Dendritic cell treated with granulocyte-macrophage colony-stimulating factor and Interleukin-4, amounts not matched to agents 40 ng/mL and 50 ng/mL, for 4 days (primary cell): ENCODE measurements at regions of chr20 and their contacts with region 1.

Region 1: DNA sequence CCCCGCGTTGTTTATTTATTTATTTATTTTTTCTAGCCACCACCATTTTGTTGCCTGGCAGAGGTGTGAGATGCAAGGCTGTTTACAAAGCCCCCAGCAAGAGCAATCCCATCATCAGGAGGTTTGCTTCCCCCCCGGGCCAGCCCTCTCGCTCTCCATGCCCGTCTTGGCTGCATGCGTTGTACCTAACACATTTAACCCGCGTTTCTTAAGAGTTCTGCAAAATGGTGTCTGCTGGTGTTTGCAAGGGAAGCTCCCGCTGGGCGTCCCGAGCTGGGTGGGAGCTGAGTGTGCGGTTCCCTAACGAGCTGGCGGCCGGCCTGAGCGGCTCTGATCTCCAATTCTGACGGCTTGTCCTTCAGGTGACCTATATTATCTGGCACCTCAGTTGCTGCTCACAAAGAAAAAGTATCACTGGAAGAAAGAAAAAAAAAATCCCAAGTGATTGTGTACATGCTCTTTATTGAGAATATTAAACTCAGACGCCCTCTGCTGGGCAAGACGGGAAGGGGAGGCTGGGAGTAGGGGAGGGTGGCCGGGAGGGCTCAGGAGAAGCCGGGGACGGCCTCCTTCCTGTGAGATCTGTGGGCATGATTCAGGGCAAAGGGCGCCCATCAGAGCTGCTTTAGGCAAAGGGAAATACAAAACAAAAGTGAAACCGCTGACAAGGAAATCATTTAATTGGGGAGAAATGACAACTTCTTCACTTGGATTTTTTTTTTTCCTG is 154.8 kb downstream of the BCAS1 start:
- H3K4me3 Mint-ChIP-seq: peak overlapping the region; percentile 94
- H3K27ac Mint-ChIP-seq: peak overlapping the region; percentile 95
- H3K4me1 Mint-ChIP-seq: peaks cover 70% of the 10 kb centered on the region
- H3K27me3 Mint-ChIP-seq: no peaks in the 10 kb centered on the region

Region 2: GRCh38 chr20:53656293-53657202 is 259.1 kb before region 1 on chr20:
- intact Hi-C with region 1: loop called (anchors 5 kb)
- H3K4me3 Mint-ChIP-seq: peak overlapping the region; percentile 64
- H3K27ac Mint-ChIP-seq: peak overlapping the region; percentile 98
- H3K4me1 Mint-ChIP-seq: peaks cover 63% of the 10 kb centered on the region
- H3K27me3 Mint-ChIP-seq: no peaks in the 10 kb centered on the region

Region 3: DNA sequence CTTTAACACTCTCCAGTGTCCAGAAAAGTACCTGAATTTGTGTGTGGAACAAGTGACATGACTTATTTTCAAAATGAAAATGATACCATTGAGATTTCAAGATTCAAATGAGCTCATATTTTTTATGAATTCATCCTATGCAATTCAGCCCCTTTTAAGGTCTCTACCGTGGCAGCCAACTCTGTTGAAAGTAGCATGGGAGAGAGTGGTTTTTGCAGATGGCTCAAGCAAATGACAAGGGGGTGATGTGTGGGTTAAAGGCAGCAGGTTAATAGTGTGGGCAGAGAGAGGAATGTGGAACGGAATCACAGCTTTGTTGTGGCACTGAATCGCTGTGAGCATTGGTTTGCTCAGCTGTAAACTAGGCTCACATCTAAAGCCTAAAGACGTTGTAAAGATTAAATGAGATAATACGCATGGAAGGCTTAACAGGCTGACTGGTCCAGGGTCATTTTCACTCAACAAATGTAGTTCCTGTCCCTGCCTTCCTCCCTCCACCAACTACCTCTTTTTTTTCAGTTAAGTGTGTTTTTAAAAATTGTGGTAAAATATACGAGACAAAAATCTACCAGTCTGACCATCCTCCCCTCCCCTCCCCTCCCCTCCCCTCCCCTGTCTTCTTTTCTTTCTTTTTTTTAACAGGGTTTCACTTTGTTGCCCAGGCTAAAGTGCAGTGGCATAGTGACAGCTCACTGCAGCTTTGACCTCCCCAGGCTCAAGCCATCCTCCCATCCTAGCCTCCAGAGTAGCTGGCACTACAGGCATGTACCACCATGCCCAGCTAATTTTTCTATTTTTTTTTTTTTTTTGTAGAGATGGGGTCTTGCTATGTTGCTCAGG is 207.3 kb before region 1 on chr20:
- intact Hi-C with region 1: loop called (anchors 5 kb)
- H3K4me3 Mint-ChIP-seq: peak overlapping the region; percentile 61
- H3K27ac Mint-ChIP-seq: peak overlapping the region; percentile 98
- H3K4me1 Mint-ChIP-seq: peaks cover 50% of the 10 kb centered on the region
- H3K27me3 Mint-ChIP-seq: no peaks in the 10 kb centered on the region

Region 4: GRCh38 chr20:53750827-53751619 is 164.6 kb before region 1 on chr20:
- intact Hi-C with region 1: loop called (anchors 10 kb)
- H3K4me3 Mint-ChIP-seq: no peak overlapping the region
- H3K27ac Mint-ChIP-seq: peak overlapping the region; percentile 82
- H3K4me1 Mint-ChIP-seq: peaks cover 43% of the 10 kb centered on the region
- H3K27me3 Mint-ChIP-seq: no peaks in the 10 kb centered on the region

Region 5: DNA sequence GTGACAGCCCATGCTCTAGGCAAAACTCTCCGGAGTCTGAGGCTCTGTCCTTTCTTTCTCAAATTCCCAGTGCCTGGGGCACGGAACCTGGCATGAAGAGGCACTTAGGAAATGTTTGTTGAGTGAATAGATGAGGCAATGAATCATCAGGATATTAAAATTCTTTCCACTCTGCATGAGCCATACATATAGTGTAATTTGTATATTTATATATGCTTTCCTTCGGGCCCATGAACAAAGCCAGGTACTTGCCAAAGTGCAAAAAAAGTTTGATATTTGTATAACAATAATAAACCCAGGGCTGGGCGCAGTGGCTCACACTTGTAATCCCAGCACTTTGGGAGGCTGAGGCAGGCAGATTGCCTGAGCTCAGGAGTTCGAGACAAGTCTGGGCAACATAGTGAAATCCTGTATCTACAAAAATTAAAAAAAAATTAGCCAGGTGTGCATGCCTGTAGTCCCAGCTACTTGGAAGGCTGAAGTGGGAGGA is 109.7 kb before region 1 on chr20:
- intact Hi-C with region 1: no loop called
- H3K4me3 Mint-ChIP-seq: no peak overlapping the region
- H3K27ac Mint-ChIP-seq: no peak overlapping the region
- H3K4me1 Mint-ChIP-seq: no peaks in the 10 kb centered on the region
- H3K27me3 Mint-ChIP-seq: no peaks in the 10 kb centered on the region

Region 6: DNA sequence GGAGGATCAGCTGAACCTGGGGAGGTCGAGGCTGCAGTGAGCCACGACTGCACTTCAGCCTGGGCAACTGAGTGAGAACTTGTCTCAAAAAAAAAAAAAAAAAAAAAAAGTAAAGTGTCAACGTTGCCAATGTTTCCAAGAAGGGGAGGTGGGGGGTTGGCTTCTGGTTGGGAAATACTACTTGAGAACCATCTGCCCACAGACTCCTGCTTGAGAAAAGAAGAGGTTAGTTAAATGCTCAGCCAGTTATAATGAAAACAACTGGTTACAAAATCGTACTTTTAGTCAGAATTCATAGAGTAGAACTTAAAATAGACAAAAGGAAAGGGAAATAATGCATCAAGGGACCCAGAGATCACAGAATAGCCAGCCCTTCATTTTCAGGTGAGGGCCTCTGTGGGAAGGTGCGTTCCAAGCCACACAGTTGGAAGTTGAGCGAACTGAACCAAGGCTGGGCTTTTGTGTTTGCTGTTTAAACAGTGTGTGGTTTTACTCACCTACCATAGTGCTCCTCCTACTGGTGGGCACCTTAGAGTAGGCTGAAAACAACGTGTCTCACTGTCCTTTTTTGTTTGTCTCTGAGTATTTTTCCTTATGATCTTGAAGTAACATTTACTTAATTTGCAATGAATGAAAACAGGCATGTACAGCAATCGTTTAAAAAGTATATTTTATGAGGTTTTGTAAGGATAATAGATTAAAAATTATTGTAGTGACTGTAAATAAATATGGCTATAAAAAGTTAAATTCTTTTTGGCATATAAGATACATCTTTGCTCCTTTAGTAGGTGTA is 45.9 kb before region 1 on chr20:
- intact Hi-C with region 1: loop called (anchors 2 kb)
- H3K4me3 Mint-ChIP-seq: no peak overlapping the region
- H3K27ac Mint-ChIP-seq: peak overlapping the region; percentile 74
- H3K4me1 Mint-ChIP-seq: peaks cover 49% of the 10 kb centered on the region
- H3K27me3 Mint-ChIP-seq: no peaks in the 10 kb centered on the region

Region 7: DNA sequence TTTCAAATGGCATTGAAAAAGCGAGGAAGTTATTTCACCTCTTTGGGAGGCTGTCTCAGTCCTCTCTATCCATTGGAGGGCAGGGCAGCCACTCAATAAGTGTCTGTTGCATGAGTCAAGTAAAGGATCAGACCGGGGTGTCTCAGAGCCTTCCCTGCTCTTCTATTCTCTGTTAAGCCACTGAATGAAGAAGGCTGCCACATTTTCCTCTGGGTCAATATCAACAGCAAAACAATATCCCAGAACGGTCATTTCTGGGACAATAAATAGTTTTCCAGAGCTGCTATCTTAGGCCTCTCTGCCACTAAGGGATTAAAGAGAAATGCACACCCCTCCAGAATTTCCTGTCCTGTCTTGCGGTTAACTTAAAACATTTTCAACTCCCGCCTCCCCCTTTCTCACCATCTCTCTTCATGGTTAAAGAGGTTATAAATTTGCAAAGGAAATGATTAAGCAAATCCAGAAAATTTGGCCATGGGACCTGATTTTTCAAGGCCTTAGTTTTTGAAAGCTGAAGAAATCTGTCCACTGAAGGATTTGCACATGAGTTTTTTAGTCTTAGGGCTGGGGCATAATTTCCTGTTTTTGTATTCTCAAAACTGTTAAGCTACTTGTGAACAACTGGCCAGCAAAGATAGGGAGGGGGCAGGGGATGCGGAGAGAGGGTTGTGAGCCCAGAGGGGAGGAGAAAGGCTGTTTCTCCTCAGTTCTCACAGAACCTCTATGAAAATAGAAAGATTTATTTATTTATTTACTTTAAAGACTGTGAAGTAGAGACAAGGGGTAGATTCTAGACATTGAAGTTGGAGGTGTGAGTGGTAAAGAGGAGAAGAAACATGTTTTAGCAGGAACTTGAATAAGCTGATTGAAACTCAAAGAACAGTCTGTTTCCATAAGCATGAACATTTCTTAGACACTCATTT is 19.1 kb after region 1 on chr20:
- intact Hi-C with region 1: loop called (anchors 2 kb)
- H3K4me3 Mint-ChIP-seq: peak overlapping the region; percentile 34
- H3K27ac Mint-ChIP-seq: peak overlapping the region; percentile 88
- H3K4me1 Mint-ChIP-seq: peaks cover 78% of the 10 kb centered on the region
- H3K27me3 Mint-ChIP-seq: no peaks in the 10 kb centered on the region

Region 8: GRCh38 chr20:54017809-54018208 is 102.2 kb after region 1 on chr20:
- intact Hi-C with region 1: no loop called
- H3K4me3 Mint-ChIP-seq: peak overlapping the region; percentile 55
- H3K27ac Mint-ChIP-seq: peak overlapping the region; percentile 93
- H3K4me1 Mint-ChIP-seq: peaks cover 40% of the 10 kb centered on the region
- H3K27me3 Mint-ChIP-seq: no peaks in the 10 kb centered on the region

Region 9: DNA sequence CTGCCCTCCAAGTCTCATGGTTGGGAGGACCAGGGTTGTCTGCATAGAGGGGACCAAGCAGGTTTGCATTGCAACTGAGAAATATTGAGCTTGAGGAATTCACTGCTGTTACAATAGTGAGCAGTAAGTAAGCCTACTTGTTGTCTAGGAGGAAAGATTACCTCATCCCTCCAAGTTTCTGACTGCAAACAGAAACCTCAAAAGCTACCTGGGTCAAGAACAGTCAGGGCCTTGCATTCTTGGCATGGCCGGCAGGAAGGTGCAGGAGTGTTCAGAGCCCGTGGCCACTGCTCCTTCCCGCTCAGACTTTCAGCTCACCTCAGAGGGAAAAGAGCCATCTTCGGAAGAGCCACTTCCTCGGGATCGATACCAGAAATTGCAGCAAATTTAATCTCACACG is 513.8 kb after region 1 on chr20:
- intact Hi-C with region 1: no loop called
- H3K4me3 Mint-ChIP-seq: no peak overlapping the region
- H3K27ac Mint-ChIP-seq: no peak overlapping the region
- H3K4me1 Mint-ChIP-seq: no peaks in the 10 kb centered on the region
- H3K27me3 Mint-ChIP-seq: no peaks in the 10 kb centered on the region